ENCODE measurements at regions of chr17 and their contacts with region 1.

Region 1: DNA sequence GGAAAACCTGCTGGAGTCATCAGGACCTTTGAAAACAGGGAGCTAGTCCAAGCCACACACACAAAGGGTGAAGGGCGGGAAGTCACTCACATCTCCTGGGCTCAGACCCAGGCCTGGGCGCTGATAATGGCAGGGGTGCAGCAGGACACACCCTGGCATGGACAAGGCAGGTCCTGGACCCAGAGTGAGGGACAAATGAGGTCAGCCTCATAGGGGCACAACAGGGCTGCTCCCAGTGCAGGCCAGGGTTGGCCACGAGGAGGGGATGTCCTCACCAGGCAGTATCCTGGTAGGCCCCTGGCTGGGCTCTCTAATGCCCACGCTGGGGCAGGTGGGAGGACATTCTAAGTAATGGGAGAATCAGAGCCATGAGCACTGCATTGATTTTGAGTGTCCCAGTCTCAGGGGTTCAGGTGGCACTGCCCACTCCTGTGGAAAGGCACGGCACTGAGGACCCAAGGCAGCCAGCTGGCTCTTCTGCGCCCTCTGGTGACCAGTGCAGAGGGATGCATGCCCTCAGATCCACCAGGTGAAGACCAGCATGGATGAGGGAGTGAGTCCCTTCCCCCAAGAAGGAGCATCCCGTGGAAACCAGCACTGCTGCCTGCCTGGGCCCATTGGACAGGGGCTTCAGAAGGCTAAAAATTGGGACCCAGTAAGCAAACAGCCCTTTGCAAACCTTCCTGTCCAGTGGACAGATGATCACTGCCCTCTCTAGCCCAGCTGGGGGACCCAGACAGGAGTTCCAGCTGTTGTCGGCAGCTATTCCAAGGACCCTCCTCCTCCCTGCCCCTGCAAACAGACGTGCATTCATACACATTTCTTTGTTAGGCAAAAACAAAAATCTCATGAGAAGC is 23.4 kb upstream of the SREBF1 start:
- DNase-seq: peak; percentile 69 to 75
- ATAC-seq: peak; percentile 88 to 97 (median 94)
- H3K4me3 ChIP-seq: no peak overlapping the region
- H3K27ac ChIP-seq: peak overlapping the region in 7 of 10 donors; percentile 7 to 64 (median 39)
- H3K4me1 ChIP-seq: peaks cover 9 to 42% (median 15%) of the 10 kb centered on the region in 9 donors
- H3K27me3 ChIP-seq: no peaks in the 10 kb centered on the region
- CTCF ChIP-seq: peak; percentile 89 to 99 (median 97)

Region 2: DNA sequence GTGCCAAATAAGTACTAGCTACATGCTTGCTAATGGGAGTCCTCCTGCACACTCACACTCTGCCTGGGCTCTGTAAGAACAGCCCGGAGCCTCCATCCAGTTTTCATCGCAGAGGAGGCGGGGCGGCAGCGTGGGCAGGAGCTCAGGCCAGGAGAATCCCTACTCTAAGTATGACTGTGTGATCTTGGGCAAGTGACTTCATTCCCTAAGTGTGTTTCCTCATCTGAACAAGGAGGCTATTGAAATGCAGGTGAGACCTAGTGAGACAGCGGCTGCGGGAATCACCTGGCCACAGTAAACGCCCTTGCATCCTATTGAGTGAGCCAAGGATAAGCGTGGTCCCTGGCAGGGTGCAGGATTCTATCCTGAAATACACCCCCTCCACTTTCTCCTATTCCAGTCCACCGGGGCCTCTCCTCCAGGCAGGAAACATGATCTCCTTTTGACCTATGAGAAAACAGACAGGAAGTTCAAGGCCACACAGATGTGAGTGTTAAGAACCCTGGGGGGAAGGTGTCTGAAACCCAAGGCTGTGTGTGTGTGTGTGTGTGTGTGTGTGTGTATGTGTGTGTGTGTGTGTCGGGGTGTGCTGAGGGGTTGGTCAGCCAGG is 184.1 kb before region 1 on chr17:
- intact Hi-C with region 1: loop called in 9 of 10 experiments (anchors 1 to 10 kb)
- DNase-seq: no peak
- ATAC-seq: no peak
- H3K4me3 ChIP-seq: no peak overlapping the region
- H3K27ac ChIP-seq: no peak overlapping the region
- H3K4me1 ChIP-seq: peaks cover 0 to 34% (median 30%) of the 10 kb centered on the region in 9 donors
- H3K27me3 ChIP-seq: no peaks in the 10 kb centered on the region
- CTCF ChIP-seq: no peak

Region 3: DNA sequence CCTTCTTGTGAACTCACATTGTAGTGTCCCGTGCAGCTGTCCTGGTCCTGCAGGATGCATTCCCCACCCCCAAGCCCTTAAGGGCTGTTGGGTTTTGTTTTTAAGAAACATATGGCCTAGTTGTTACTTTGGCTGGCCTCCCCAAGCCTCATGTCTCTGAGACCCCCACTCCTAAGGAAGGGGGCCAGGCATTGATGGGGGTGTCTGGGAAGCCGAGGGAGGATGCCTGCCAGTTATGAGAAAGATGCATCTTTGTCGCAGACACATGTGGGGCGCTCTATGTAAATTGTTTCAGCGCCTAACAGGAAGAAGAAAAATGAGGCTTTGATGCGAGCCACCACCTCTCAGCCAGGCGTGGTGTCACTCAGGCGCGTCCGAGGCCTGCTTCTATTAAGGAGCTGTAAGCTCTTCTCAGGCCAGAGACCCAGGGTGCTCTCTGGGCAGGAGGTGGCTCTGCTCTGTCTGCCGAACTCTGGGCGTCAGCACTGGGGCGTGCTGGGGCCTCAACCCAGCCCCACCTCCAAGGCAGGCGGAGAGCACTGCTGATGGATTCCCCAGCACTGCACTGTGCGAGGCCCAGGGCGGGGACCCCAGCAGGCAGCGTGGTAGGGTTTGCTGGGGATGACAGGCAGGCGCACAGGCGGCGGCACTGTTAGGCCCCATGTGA is 93.9 kb before region 1 on chr17:
- intact Hi-C with region 1: loop called in 1 of 10 experiments (anchors 10 kb)
- DNase-seq: no peak
- ATAC-seq: peak in 1 of 8 donors; percentile 16
- H3K4me3 ChIP-seq: no peak overlapping the region
- H3K27ac ChIP-seq: peak overlapping the region in 2 of 10 donors; percentile 9 to 31
- H3K4me1 ChIP-seq: peaks cover 29 to 77% (median 69%) of the 10 kb centered on the region in 9 donors
- H3K27me3 ChIP-seq: no peaks in the 10 kb centered on the region
- CTCF ChIP-seq: no peak

Region 4: GRCh38 chr17:17812211-17813057 is 47.7 kb before region 1 on chr17:
- intact Hi-C with region 1: loop called (anchors 1 to 5 kb)
- DNase-seq: peak; percentile 77 to 82
- ATAC-seq: peak; percentile 11 to 65 (median 42)
- H3K4me3 ChIP-seq: no peak overlapping the region
- H3K27ac ChIP-seq: peak overlapping the region in 7 of 10 donors; percentile 8 to 56 (median 44)
- H3K4me1 ChIP-seq: peaks cover 14 to 91% (median 52%) of the 10 kb centered on the region in 9 donors
- H3K27me3 ChIP-seq: no peaks in the 10 kb centered on the region
- CTCF ChIP-seq: peak; percentile 99 to 100 (median 100)

Region 5: GRCh38 chr17:17823433-17824118 is 36.6 kb before region 1 on chr17:
- intact Hi-C with region 1: loop called in 1 of 10 experiments (anchors 5 kb)
- DNase-seq: peak; percentile 83 to 88
- ATAC-seq: peak; percentile 86 to 94 (median 90)
- H3K4me3 ChIP-seq: peak overlapping the region; percentile 1 to 67 (median 54)
- H3K27ac ChIP-seq: peak overlapping the region; percentile 57 to 92 (median 83)
- H3K4me1 ChIP-seq: peaks cover 29 to 78% (median 69%) of the 10 kb centered on the region in 9 donors
- H3K27me3 ChIP-seq: no peaks in the 10 kb centered on the region
- CTCF ChIP-seq: no peak

Region 6: GRCh38 chr17:17890773-17891759 is 30.9 kb after region 1 on chr17:
- intact Hi-C with region 1: loop called in 1 of 10 experiments (anchors 2 kb)
- DNase-seq: peak; percentile 38 to 42
- ATAC-seq: peak; percentile 49 to 76 (median 66)
- H3K4me3 ChIP-seq: no peak overlapping the region
- H3K27ac ChIP-seq: peak overlapping the region in 1 of 10 donors; percentile 12
- H3K4me1 ChIP-seq: peaks cover 4 to 43% (median 27%) of the 10 kb centered on the region in 9 donors
- H3K27me3 ChIP-seq: no peaks in the 10 kb centered on the region
- CTCF ChIP-seq: peak; percentile 36 to 75 (median 66)